ENCODE measurements at regions of chr1 and their contacts with region 1.

Region 1: DNA sequence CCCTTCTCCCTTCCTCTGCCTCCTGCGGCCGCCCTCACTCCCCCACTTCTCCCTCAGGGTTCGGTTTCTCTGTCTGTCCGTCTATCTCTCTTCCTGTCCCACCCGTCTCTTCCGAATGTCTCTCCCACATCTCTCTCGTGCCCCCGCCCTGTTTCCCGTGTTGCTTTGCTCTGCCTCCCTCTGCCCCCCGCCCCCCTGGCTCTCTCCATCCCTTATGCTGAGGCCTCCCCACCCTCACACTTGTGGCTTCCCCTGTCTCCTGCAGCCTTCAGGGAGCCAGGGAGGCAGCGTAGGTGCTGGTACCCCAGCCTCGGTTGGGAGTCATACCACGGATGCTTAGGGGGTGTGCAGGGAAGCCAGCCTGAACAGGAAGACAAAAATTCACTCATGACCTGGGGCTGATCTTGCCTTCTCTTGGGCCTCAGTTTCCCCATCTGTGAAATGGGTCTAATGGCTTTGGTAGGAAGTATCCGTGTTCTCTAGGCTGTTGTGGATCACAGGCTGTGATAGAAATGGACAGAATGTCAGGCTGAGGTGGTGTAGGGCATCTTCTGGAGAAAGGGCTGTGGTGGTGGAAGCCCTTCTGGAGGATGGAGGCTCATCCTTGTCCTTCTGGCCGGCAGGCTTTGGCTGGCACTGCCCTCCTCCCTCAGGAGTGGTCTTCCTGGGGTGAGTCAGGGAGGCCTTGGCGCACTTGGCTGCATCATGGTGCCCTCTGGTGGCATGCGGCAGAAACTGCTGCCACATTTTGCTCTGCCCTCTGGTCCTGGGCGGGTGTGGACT is 55.5 kb downstream of the FOXO6 start:
- DNase-seq: peak; percentile 71 to 80 (median 78)
- H3K4me3 ChIP-seq: no peak overlapping the region
- H3K27ac ChIP-seq: no peak overlapping the region
- H3K4me1 ChIP-seq: no peaks in the 10 kb centered on the region
- H3K27me3 ChIP-seq: peaks cover 0 to 6% (median 0%) of the 10 kb centered on the region in 5 experiments

Region 2: DNA sequence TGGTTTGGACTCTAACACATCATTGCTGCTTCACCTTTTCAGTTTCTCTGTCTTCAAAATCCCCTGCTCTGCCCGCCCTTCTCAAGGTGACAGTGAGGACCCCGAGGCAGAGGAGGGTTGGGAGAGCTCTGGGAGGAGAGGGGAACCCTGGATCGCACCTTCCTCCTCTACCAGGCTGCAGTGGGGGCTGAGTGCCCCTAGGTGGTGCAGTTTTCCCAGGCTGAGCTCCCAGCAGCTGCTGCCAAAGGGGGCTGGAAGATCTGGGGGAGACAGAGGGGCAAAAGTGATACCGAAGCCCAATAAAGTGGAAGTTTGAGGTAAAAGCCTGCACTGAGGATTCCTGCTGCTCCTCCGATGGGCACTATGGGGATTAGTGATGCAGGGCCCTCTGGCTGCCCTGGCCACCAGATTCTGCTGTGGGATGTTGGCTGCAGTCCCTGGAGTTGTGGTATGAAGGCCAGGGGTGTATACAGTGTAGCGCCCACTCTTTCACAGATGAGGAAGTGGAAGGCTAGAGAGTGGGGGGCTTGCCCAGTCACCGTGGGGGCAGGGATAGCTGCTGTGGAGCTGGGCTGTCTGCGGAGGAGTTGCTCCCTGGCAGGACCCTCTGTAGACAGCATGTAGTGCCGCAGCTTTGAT is 133.9 kb before region 1 on chr1:
- CTCF ChIA-PET with region 1: interaction called, 51 read pairs
- POLR2A ChIA-PET with region 1: no interaction called
- DNase-seq: peak; percentile 24 to 56 (median 53)
- H3K4me3 ChIP-seq: no peak overlapping the region
- H3K27ac ChIP-seq: no peak overlapping the region
- H3K4me1 ChIP-seq: peaks cover 0 to 6% (median 4%) of the 10 kb centered on the region in 4 experiments
- H3K27me3 ChIP-seq: peaks cover 0 to 18% (median under 1%) of the 10 kb centered on the region in 5 experiments

Region 3: DNA sequence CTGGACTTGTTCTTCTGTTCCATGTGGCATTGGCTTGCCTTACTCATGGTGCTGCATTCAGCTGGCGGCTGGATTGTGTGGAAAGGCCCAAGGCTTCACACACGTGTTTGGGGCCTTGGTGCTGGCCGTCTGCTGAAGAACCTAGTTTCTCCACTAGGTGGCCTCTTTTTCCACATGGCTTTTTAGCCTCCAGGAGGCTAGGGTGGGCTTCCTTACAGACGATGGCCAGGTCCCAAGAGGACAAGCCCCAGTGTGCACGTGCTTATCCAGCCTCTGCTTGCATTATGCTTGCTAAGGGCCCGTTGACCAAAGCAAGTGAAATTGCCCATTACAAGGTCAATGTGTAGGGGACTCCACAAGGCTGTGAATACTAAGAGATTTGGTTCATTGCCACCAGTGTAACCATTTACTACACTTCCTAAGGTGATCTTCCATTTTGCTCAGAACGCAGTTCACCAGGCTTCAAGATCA is 103.0 kb before region 1 on chr1:
- CTCF ChIA-PET with region 1: interaction called, 205 read pairs
- POLR2A ChIA-PET with region 1: no interaction called
- DNase-seq: peak; percentile 36 to 46 (median 42)
- H3K4me3 ChIP-seq: no peak overlapping the region
- H3K27ac ChIP-seq: no peak overlapping the region
- H3K4me1 ChIP-seq: no peaks in the 10 kb centered on the region
- H3K27me3 ChIP-seq: peaks cover 0 to 4% (median 0%) of the 10 kb centered on the region in 5 experiments

Region 4: DNA sequence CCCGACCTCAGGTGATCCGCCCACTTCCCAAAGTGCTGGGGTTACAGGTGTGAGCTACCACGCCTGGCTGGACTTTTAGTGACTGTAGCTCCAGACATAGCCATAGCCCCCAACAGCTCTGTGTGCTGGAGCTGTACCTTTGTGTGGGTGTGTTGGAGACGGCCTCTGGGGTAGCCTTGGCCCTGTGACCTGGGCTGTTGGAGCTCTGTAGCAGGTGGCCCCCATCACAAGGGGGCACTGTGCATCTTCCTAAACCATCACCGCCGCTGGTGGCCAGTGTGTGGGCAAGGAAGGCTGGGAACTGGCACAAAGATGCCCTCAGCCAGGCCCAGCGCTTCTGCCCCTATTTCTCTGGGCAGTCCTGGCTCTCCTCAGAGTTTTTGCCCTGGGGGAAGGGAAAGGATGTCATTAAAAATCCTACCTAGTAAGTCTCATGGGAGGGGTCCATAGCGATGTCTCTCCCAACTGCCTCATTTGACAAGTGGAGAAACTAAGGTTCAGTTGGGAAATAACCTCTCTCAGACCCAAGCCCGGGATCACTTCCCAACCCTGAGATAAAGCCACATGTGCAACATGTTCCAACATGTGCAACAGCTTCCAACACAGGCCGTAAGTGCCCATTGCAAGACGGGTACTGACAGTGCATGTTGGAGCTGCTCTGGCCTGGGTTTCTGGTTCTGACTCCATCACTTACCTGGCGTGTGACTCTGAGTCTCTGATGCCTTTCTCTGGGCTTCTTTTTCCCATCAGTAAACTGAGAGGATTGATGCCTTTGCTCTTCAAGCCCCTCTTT is 93.7 kb before region 1 on chr1:
- CTCF ChIA-PET with region 1: interaction called, 205 read pairs
- POLR2A ChIA-PET with region 1: no interaction called
- DNase-seq: peak in 2 of 3 donors; percentile 70 to 73
- H3K4me3 ChIP-seq: no peak overlapping the region
- H3K27ac ChIP-seq: no peak overlapping the region
- H3K4me1 ChIP-seq: peaks cover 0 to 6% (median 0%) of the 10 kb centered on the region in 4 experiments
- H3K27me3 ChIP-seq: no peaks in the 10 kb centered on the region

Region 5: GRCh38 chr1:41432481-41433280 is 15.9 kb after region 1 on chr1:
- CTCF ChIA-PET with region 1: interaction called, 17 read pairs
- POLR2A ChIA-PET with region 1: no interaction called
- DNase-seq: peak; percentile 72 to 85 (median 81)
- H3K4me3 ChIP-seq: no peak overlapping the region
- H3K27ac ChIP-seq: no peak overlapping the region
- H3K4me1 ChIP-seq: peaks cover 0 to 19% (median 8%) of the 10 kb centered on the region in 4 experiments
- H3K27me3 ChIP-seq: peaks cover 0 to 24% (median 9%) of the 10 kb centered on the region in 5 experiments

Region 6: DNA sequence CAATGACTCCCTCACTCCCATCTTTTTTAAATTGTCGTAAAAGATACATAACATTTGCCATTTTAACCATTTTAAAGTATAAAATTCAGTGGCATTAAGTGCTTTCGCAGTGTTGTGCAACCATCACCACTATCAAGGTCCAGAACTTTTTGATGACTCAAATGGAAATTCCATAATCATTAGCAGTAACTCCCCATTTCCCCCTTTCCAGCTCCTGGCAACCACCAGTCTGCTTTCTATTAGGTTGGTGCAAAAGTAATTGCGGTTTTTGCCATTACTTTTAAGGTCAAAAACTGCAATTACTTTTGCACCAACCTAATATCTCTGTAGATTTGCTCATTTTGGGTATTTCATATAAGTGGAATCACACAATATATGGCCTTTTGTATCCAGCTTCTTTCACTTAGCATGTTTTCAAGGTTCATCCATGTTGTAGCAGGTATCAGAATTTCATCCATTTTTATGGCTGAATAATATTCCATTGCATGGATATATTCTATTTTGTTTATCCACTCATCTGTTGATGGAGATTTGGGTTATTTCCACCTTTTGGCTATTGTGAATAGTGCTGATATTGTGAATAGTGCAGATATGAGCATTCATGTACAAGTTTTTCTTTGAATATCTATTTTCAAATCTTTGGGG is 342.3 kb after region 1 on chr1:
- CTCF ChIA-PET with region 1: no interaction called
- POLR2A ChIA-PET with region 1: no interaction called
- DNase-seq: no peak
- H3K4me3 ChIP-seq: no peak overlapping the region
- H3K27ac ChIP-seq: no peak overlapping the region
- H3K4me1 ChIP-seq: peaks cover 0 to 17% (median 6%) of the 10 kb centered on the region in 4 experiments
- H3K27me3 ChIP-seq: no peaks in the 10 kb centered on the region